ENCODE measurements at regions of chr5 and their contacts with region 1.

Region 1: GRCh38 chr5:151659001-151659754 is 27.5 kb downstream of the SPARC start:
- DNase-seq: peak; percentile 77
- ATAC-seq: peak; percentile 88
- H3K4me3 Mint-ChIP-seq: no peak overlapping the region
- H3K27ac Mint-ChIP-seq: no peak overlapping the region
- H3K4me1 Mint-ChIP-seq: peaks cover 24% of the 10 kb centered on the region
- H3K27me3 Mint-ChIP-seq: peaks cover 14% of the 10 kb centered on the region
- CTCF ChIP-seq: no peak

Region 2: GRCh38 chr5:151556806-151557205 is 102.4 kb before region 1 on chr5:
- CTCF ChIA-PET with region 1: no interaction called
- POLR2A ChIA-PET with region 1: no interaction called
- intact Hi-C with region 1: no loop called
- DNase-seq: no peak
- ATAC-seq: peak; percentile 68
- H3K4me3 Mint-ChIP-seq: peak overlapping the region; percentile 20
- H3K27ac Mint-ChIP-seq: peak overlapping the region; percentile 47
- H3K4me1 Mint-ChIP-seq: peaks cover 20% of the 10 kb centered on the region
- H3K27me3 Mint-ChIP-seq: no peaks in the 10 kb centered on the region
- CTCF ChIP-seq: no peak

Region 3: DNA sequence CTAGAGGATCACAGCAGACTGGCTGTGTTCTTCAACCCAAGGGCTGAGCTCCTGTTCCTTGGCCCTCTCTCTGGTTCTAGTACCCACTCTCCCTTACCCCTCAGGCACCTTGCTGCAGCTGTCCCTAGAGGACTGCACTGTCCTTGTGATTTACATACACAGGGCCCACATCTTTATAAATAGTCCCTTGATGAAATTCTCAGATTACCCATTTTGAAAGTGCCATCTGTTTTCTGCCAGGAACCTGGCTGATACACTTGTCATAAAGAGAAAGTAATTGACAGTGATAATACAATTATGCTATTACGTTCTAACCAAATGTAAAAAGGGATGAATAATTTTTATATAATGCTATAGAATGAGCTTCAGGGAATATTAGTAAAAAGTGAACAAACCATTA is 44.0 kb after region 1 on chr5:
- CTCF ChIA-PET with region 1: interaction called, 5 read pairs
- POLR2A ChIA-PET with region 1: interaction called, 4 read pairs
- intact Hi-C with region 1: loop called (anchors 5 kb)
- DNase-seq: no peak
- ATAC-seq: peak; percentile 89
- H3K4me3 Mint-ChIP-seq: no peak overlapping the region
- H3K27ac Mint-ChIP-seq: no peak overlapping the region
- H3K4me1 Mint-ChIP-seq: peaks cover 14% of the 10 kb centered on the region
- H3K27me3 Mint-ChIP-seq: no peaks in the 10 kb centered on the region
- CTCF ChIP-seq: no peak

Region 4: DNA sequence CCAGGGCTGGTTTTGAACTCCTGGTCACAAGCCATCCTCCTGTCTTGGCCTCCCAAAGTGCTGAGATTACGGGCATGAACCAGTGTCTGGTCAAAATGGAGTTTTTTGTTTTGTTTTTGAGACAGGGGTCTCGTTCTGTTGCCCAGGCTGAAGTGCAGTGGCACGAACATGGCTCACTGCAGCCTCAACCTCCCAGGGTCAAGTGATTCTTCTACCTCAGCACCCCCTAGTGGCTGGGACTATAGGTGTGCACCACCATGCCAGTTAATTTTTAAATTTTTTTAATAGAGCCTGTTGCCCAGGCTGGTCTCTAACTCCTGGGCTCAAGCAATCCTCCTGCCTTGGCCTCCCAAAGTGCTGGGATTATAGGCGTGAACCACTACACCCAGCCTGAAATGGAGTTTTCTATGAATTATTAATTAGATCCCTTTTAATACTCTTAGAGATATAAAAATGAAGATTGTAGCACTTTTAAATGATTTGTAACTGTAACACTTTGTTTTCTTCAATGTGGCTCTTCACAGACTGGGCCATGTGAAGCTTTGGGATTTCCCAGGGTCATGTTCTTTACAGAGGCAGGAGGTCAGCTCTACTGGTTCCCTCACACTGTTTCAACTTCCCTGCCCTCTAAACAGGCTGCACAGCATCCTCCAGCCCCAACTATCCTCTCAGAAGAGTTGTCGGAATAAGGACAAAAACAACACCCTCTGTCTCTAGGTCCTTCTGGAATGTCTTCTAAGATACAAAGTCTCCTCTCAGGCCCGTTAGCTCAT is 60.2 kb after region 1 on chr5:
- CTCF ChIA-PET with region 1: interaction called, 9 read pairs
- POLR2A ChIA-PET with region 1: interaction called, 6 read pairs
- intact Hi-C with region 1: loop called (anchors 1 kb)
- DNase-seq: no peak
- ATAC-seq: no peak
- H3K4me3 Mint-ChIP-seq: no peak overlapping the region
- H3K27ac Mint-ChIP-seq: no peak overlapping the region
- H3K4me1 Mint-ChIP-seq: peaks cover 30% of the 10 kb centered on the region
- H3K27me3 Mint-ChIP-seq: no peaks in the 10 kb centered on the region
- CTCF ChIP-seq: no peak

Region 5: DNA sequence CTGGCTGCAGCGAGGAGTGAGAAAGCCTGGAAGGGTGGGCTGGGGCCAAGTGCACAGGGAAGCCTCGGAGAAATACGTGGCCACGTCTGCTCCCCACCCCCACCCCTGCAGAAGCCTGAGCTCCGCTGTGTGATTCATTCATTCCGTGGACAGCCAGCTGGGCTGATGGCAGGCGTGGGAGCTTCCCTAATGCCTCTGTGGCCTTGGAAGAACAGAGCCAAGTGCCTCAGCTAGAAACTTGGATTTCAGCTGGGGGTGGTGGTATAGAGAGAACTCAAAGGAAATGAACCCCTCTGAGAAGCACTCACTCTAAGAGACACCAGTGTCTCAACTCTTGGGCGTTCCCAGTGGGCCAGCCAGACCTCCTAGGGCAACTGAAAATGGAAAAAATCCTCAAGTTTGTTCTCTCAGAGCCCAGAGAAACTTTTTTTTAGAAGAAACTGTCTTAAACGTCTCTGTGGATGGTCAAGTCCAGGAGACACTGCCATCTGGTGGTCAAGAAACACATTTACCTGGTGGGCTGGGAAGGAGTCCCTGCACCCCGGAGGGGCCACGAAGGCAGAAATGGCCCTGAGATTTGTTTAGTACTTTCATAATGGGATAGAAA is 81.3 kb after region 1 on chr5:
- CTCF ChIA-PET with region 1: interaction called, 223 read pairs
- POLR2A ChIA-PET with region 1: interaction called, 6 read pairs
- intact Hi-C with region 1: loop called (anchors 1 kb)
- DNase-seq: no peak
- ATAC-seq: peak; percentile 69
- H3K4me3 Mint-ChIP-seq: no peak overlapping the region
- H3K27ac Mint-ChIP-seq: no peak overlapping the region
- H3K4me1 Mint-ChIP-seq: peaks cover 16% of the 10 kb centered on the region
- H3K27me3 Mint-ChIP-seq: no peaks in the 10 kb centered on the region
- CTCF ChIP-seq: peak; percentile 68

Region 6: GRCh38 chr5:151751091-151751490 is 91.9 kb after region 1 on chr5:
- CTCF ChIA-PET with region 1: interaction called, 223 read pairs
- POLR2A ChIA-PET with region 1: no interaction called
- intact Hi-C with region 1: no loop called
- DNase-seq: no peak
- ATAC-seq: no peak
- H3K4me3 Mint-ChIP-seq: no peak overlapping the region
- H3K27ac Mint-ChIP-seq: no peak overlapping the region
- H3K4me1 Mint-ChIP-seq: peaks cover 34% of the 10 kb centered on the region
- H3K27me3 Mint-ChIP-seq: no peaks in the 10 kb centered on the region
- CTCF ChIP-seq: no peak

Region 7: GRCh38 chr5:152142840-152143469 is 483.8 kb after region 1 on chr5:
- CTCF ChIA-PET with region 1: interaction called, 20 read pairs
- POLR2A ChIA-PET with region 1: no interaction called
- intact Hi-C with region 1: loop called (anchors 1 kb)
- DNase-seq: peak; percentile 36
- ATAC-seq: peak; percentile 47
- H3K4me3 Mint-ChIP-seq: no peak overlapping the region
- H3K27ac Mint-ChIP-seq: no peak overlapping the region
- H3K4me1 Mint-ChIP-seq: no peaks in the 10 kb centered on the region
- H3K27me3 Mint-ChIP-seq: peaks cover 2% of the 10 kb centered on the region
- CTCF ChIP-seq: peak; percentile 81

Measured in activated B cell treated with CpG ODN at 0.5 μM for 24 hours (primary cell).